Right ventricle myocardium inferior (tissue), 1 donor: ENCODE measurements at regions of chr1 and their contacts with region 1.

Region 1: DNA sequence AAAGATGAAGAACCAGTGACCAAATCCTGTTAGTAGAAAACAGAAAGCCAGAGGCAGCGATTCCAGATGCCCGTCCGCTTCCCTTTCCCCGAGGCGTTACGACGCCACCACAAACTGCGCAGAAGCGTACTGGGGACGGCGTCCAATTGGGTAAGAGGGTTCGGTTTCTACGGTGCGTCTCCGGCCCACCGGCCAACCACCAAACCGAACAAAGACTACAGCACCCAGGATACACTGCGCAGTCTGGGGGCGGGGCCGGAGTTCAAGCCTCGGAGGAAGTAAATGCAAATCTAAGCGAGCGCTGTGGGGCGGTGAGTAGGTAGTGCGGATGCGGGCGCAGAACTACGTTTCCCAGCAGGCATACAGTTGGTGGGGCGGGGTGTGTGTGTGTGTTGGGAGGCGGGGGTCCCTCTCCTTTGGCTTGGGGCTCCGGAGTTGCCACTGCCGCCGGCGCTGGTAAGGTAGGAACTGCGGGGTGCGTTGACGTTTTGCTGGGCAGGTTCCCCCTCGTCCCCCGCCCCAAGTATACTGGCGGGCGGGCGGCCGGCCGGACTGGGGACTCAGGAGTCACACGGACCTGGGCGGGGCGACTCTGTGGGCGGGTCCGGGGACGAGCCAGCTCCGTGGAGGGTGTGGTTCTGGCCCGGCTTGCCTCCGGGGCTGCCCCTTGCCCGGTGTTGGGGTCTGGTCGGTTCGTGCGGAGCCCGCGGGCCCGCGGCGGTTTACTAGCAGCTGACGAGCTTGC is at the starts of genes SWT1 and TRMT1L:
- DNase-seq: peak; percentile 100
- ATAC-seq: peak; percentile 98
- total RNA-seq, gene SWT1: 5.2 TPM
- total RNA-seq, gene TRMT1L: 27.6 TPM

Region 2: GRCh38 chr1:184754476-184755225 is 402.4 kb before region 1 on chr1 and contains the start of gene EDEM3:
- intact Hi-C with region 1: loop called (anchors 5 kb)
- DNase-seq: peak; percentile 99
- ATAC-seq: peak; percentile 99
- total RNA-seq, gene EDEM3: 15.3 TPM

Region 3: DNA sequence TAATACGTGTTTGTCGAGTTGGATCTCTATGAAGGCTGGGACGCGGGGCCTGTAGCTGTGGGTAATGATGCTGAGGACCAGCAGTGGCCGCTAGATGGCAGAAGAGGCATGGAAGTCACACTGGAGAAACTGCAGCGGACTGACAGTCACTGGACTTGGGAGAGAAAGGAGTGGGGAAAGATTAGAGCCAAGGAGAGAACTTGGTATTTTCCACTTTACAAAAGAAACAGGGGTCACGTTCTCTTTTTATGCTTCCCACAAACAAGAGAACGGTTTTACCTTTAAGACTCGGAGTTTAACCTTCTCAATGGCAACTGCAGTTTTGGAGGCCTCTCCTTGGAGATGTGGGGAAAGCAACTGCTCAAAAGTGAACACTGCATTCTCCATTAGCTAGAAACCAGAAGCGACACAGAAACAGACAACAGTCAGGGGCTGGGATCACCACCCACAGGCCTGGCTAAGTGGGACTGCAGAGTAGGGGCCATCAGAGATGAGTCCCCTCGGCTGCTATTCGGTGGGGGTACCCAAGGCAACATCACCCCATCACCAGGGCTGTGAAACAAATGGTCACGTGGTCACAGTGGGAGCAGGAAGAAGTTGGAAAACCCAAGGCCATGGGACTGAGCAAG is 351.2 kb before region 1 on chr1:
- intact Hi-C with region 1: loop called (anchors 10 kb)
- DNase-seq: peak; percentile 91
- ATAC-seq: peak; percentile 96

Region 4: GRCh38 chr1:185044981-185045813 is 111.8 kb before region 1 on chr1 and contains the start of gene RNF2:
- intact Hi-C with region 1: loop called (anchors 2 kb)
- DNase-seq: peak; percentile 92
- ATAC-seq: peak; percentile 95
- total RNA-seq, gene RNF2: 13.3 TPM

Region 5: DNA sequence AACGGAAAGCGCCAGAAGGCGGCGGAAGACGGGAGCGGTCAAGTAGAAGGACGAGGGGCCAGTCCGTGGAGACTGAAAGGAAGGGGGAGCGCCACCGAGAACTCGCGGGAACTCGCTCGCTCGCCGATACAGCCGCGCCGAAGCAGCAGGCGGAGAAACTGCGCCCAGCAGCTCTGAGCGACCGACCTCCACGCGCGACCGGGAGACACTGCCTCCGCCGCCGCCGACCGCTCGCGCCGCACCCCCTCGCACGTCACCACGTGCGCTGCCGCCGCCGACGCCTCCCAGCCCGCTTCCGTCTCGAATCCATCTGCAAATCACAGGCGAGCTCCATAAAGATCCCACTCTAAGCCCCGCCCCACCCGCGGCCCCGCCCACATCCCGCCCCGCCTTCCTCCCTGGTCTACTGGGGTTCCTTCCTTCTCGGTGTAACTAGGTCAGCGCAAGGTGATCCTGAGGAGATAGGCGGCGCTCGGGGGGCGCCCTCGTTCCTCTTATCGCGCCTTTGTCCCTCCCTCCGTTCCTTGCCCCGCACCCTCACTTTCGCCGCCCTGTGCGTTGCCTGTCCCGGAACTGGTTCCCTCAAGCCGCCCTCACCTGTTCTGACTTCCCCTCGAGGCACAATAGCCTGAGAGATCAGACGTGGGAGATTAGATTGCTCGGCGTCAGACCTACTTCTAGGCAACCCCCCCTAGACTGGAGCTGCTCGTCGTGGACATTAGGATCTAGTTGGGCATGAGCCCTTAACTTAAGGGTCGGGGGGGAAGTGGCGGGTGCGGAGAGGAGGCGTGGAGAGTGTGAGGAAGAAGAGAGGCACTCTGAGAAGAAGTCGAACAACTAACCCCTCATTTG is 160.2 kb after region 1 on chr1 and contains the start of gene IVNS1ABP:
- intact Hi-C with region 1: loop called (anchors 2 kb)
- DNase-seq: peak; percentile 97
- ATAC-seq: peak; percentile 91
- total RNA-seq, gene IVNS1ABP: 59.0 TPM